Esophagus muscularis mucosa (tissue), 4 donors: ENCODE measurements at regions of chr22 and their contacts with region 1.

Region 1: GRCh38 chr22:33302049-33302545 is 243.9 kb upstream of the SYN3 start:
- DNase-seq: no peak
- H3K4me3 ChIP-seq: no peak overlapping the region
- H3K27ac ChIP-seq: no peak overlapping the region
- H3K4me1 ChIP-seq: peaks cover 14 to 25% (median 19%) of the 10 kb centered on the region in 4 donors
- H3K27me3 ChIP-seq: no peaks in the 10 kb centered on the region
- CTCF ChIP-seq: peak; percentile 79 to 97 (median 80)
- EP300 ChIP-seq: no peak
- POLR2A ChIP-seq: no peak

Region 2: DNA sequence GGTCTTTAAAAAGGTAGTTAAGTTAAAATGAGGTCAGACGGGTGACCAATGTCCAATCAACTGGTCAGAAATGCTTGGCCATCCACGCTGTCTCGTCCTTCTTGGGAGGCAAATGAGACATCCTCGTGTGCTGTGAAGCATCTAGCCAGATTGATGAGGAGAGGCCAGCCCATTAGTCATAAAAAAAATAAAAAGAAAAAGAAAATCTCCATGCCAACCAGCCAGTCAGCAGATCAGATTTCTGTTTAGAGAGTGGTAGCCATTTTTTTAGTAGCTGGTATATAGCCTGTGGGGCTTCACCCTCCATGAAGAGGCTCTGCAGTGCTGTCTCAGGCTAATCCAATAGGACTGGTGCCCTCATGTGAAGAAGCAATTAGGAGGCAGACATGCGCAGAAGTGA is 99.2 kb after region 1 on chr22:
- intact Hi-C with region 1: no loop called
- DNase-seq: no peak
- H3K4me3 ChIP-seq: no peak overlapping the region
- H3K27ac ChIP-seq: no peak overlapping the region
- H3K4me1 ChIP-seq: peaks cover 0 to 12% (median 0%) of the 10 kb centered on the region in 4 donors
- H3K27me3 ChIP-seq: no peaks in the 10 kb centered on the region
- CTCF ChIP-seq: no peak
- EP300 ChIP-seq: no peak
- POLR2A ChIP-seq: no peak

Region 3: GRCh38 chr22:33579448-33580093 is 277.5 kb after region 1 on chr22:
- intact Hi-C with region 1: loop called (anchors 5 kb)
- DNase-seq: no peak
- H3K4me3 ChIP-seq: no peak overlapping the region
- H3K27ac ChIP-seq: no peak overlapping the region
- H3K4me1 ChIP-seq: peaks cover 10 to 23% (median 16%) of the 10 kb centered on the region in 4 donors
- H3K27me3 ChIP-seq: no peaks in the 10 kb centered on the region
- CTCF ChIP-seq: peak; percentile 77 to 93 (median 86)
- EP300 ChIP-seq: no peak
- POLR2A ChIP-seq: no peak

Region 4: GRCh38 chr22:34105461-34106062 is 803.5 kb after region 1 on chr22:
- intact Hi-C with region 1: loop called (anchors 5 kb)
- DNase-seq: peak; percentile 89
- H3K4me3 ChIP-seq: no peak overlapping the region
- H3K27ac ChIP-seq: no peak overlapping the region
- H3K4me1 ChIP-seq: peaks cover 0 to 7% (median 0%) of the 10 kb centered on the region in 4 donors
- H3K27me3 ChIP-seq: peaks cover 0 to 30% (median 0%) of the 10 kb centered on the region in 4 donors
- CTCF ChIP-seq: peak; percentile 68 to 80 (median 68)
- EP300 ChIP-seq: no peak
- POLR2A ChIP-seq: no peak